CD8-positive, alpha-beta T cell (primary cell): ENCODE measurements at regions of chr17 and their contacts with region 1.

Region 1: GRCh38 chr17:29617125-29617480 is 5.6 kb downstream of the CORO6 start:
- DNase-seq: peak; percentile 78 to 94 (median 90)
- ATAC-seq: peak; percentile 64
- H3K4me3 ChIP-seq: peak overlapping the region; percentile 75 to 82
- H3K4me3 Mint-ChIP-seq: peak overlapping the region; percentile 90
- H3K27ac ChIP-seq: peak overlapping the region in 1 of 2 experiments; percentile 58
- H3K27ac Mint-ChIP-seq: peak overlapping the region; percentile 49
- H3K4me1 ChIP-seq: peaks cover 57% of the 10 kb centered on the region
- H3K4me1 Mint-ChIP-seq: peaks cover 36% of the 10 kb centered on the region
- H3K27me3 ChIP-seq: no peaks in the 10 kb centered on the region
- H3K27me3 Mint-ChIP-seq: no peaks in the 10 kb centered on the region
- CTCF ChIP-seq: peak; percentile 81

Region 2: GRCh38 chr17:29389982-29390850 is 226.9 kb before region 1 on chr17 and contains the start of gene TAOK1:
- CTCF ChIA-PET with region 1: no interaction called
- POLR2A ChIA-PET with region 1: interaction called, 4 read pairs
- intact Hi-C with region 1: loop called in 1 of 2 experiments (anchors 5 kb)
- DNase-seq: peak; percentile 94 to 99 (median 98)
- ATAC-seq: peak; percentile 91
- H3K4me3 ChIP-seq: peak within 1 kb of the TSS; percentile 77 to 85
- H3K4me3 Mint-ChIP-seq: peak within 1 kb of the TSS; percentile 93
- H3K27ac ChIP-seq: peak within 1 kb of the TSS; percentile 84 to 87
- H3K27ac Mint-ChIP-seq: peak within 1 kb of the TSS; percentile 98
- H3K4me1 ChIP-seq: peaks cover 22% of the 10 kb centered on the region
- H3K4me1 Mint-ChIP-seq: peaks cover 41% of the 10 kb centered on the region
- H3K27me3 ChIP-seq: no peaks in the 10 kb centered on the region
- H3K27me3 Mint-ChIP-seq: no peaks in the 10 kb centered on the region
- CTCF ChIP-seq: no peak
- total RNA-seq, gene TAOK1: 25.2 to 26.8 TPM

Region 3: GRCh38 chr17:29504711-29505110 is 112.4 kb before region 1 on chr17:
- CTCF ChIA-PET with region 1: no interaction called
- POLR2A ChIA-PET with region 1: no interaction called
- intact Hi-C with region 1: no loop called
- DNase-seq: no peak
- ATAC-seq: no peak
- H3K4me3 ChIP-seq: no peak overlapping the region
- H3K4me3 Mint-ChIP-seq: no peak overlapping the region
- H3K27ac ChIP-seq: no peak overlapping the region
- H3K27ac Mint-ChIP-seq: no peak overlapping the region
- H3K4me1 ChIP-seq: no peaks in the 10 kb centered on the region
- H3K4me1 Mint-ChIP-seq: peaks cover 3% of the 10 kb centered on the region
- H3K27me3 ChIP-seq: no peaks in the 10 kb centered on the region
- H3K27me3 Mint-ChIP-seq: no peaks in the 10 kb centered on the region
- CTCF ChIP-seq: no peak

Region 4: DNA sequence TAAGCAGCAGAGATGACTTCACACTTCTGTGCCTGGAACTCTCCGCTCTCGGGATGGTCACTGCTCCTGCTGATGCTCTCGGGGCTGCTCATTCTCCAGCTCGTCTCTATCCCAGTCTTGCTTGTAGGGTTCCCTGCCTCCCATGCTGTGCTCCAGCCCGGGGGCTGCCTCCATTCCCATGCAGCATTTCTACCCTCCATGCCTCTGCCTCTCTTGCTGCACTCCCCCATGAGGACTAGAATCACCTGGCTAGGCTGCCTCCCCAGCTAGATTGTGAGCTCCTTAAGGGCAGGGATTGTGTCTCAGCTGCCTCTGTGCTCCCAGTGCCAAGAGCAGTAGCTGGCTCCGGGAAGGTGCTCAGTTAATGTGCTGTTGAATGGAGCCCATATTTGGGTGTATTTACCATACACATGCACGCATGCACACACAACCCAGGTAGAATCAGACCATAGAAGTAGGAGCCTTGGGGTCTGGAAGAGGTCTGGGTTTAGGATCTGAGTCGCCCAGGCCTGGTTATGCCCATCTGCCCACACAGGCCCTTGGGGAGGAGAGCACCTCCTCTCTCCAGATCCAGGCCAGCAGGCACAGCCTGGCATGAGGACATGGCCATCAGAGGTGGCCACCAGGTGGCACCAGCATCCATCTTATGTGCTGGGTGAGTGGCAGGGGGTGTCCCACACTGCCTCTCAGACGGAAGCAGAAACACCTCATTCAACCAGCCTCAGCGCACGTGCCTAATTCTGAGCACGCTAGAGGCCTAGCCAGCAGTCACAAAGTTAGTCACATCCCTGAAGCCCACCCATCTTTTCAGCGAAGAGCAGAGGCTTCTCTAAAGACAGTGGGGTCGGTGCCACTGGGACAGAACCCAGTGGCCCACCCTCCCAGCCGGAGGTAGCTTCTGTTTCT is 37.0 kb before region 1 on chr17:
- CTCF ChIA-PET with region 1: interaction called, 216 read pairs
- POLR2A ChIA-PET with region 1: interaction called, 5 read pairs
- intact Hi-C with region 1: loop called (anchors 1 kb)
- DNase-seq: peak; percentile 81 to 95 (median 92)
- ATAC-seq: peak; percentile 99
- H3K4me3 ChIP-seq: no peak overlapping the region
- H3K4me3 Mint-ChIP-seq: no peak overlapping the region
- H3K27ac ChIP-seq: no peak overlapping the region
- H3K27ac Mint-ChIP-seq: peak overlapping the region; percentile 34
- H3K4me1 ChIP-seq: peaks cover 13% of the 10 kb centered on the region
- H3K4me1 Mint-ChIP-seq: peaks cover 11% of the 10 kb centered on the region
- H3K27me3 ChIP-seq: no peaks in the 10 kb centered on the region
- H3K27me3 Mint-ChIP-seq: no peaks in the 10 kb centered on the region
- CTCF ChIP-seq: peak; percentile 80

Region 5: GRCh38 chr17:29597361-29598172 is 19.5 kb before region 1 on chr17:
- CTCF ChIA-PET with region 1: interaction called, 91 read pairs
- POLR2A ChIA-PET with region 1: interaction called, 63 read pairs
- intact Hi-C with region 1: no loop called
- DNase-seq: peak in 1 of 9 experiments; percentile 14
- ATAC-seq: no peak
- H3K4me3 ChIP-seq: no peak overlapping the region
- H3K4me3 Mint-ChIP-seq: no peak overlapping the region
- H3K27ac ChIP-seq: no peak overlapping the region
- H3K27ac Mint-ChIP-seq: no peak overlapping the region
- H3K4me1 ChIP-seq: peaks cover 9% of the 10 kb centered on the region
- H3K4me1 Mint-ChIP-seq: peaks cover 5% of the 10 kb centered on the region
- H3K27me3 ChIP-seq: no peaks in the 10 kb centered on the region
- H3K27me3 Mint-ChIP-seq: no peaks in the 10 kb centered on the region
- CTCF ChIP-seq: no peak

Region 6: DNA sequence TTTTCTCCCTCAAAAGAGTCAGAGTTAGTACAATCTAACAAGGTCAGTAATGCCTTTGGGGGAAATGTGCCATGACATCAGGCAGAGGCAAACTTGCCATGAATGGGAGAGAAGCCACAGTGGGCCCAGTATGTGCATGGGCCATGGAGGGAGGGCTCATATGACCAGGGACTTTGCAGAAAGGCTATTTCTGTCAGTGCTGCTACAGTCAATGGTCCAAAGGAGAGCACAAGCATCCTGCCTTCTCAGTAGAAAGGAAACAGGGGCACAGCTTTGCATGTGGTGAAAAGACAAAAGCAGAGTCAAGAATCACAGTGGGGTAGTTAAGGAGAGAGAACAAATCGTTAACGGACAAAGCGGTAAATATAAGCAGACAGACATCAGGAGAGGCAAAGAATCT is 16.8 kb after region 1 on chr17:
- CTCF ChIA-PET with region 1: interaction called, 25 read pairs
- POLR2A ChIA-PET with region 1: no interaction called
- intact Hi-C with region 1: no loop called
- DNase-seq: no peak
- ATAC-seq: no peak
- H3K4me3 ChIP-seq: no peak overlapping the region
- H3K4me3 Mint-ChIP-seq: no peak overlapping the region
- H3K27ac ChIP-seq: no peak overlapping the region
- H3K27ac Mint-ChIP-seq: peak overlapping the region; percentile 12
- H3K4me1 ChIP-seq: no peaks in the 10 kb centered on the region
- H3K4me1 Mint-ChIP-seq: peaks cover 6% of the 10 kb centered on the region
- H3K27me3 ChIP-seq: no peaks in the 10 kb centered on the region
- H3K27me3 Mint-ChIP-seq: no peaks in the 10 kb centered on the region
- CTCF ChIP-seq: no peak

Region 7: GRCh38 chr17:29760761-29761696 is 143.9 kb after region 1 on chr17:
- CTCF ChIA-PET with region 1: interaction called, 9 read pairs
- POLR2A ChIA-PET with region 1: interaction called, 23 read pairs
- intact Hi-C with region 1: loop called in 1 of 2 experiments (anchors 1 kb)
- DNase-seq: peak; percentile 80 to 95 (median 92)
- ATAC-seq: peak; percentile 84
- H3K4me3 ChIP-seq: peak overlapping the region; percentile 84 to 88
- H3K4me3 Mint-ChIP-seq: peak overlapping the region; percentile 96
- H3K27ac ChIP-seq: peak overlapping the region; percentile 75 to 81
- H3K27ac Mint-ChIP-seq: peak overlapping the region; percentile 93
- H3K4me1 ChIP-seq: peaks cover 42% of the 10 kb centered on the region
- H3K4me1 Mint-ChIP-seq: peaks cover 41% of the 10 kb centered on the region
- H3K27me3 ChIP-seq: no peaks in the 10 kb centered on the region
- H3K27me3 Mint-ChIP-seq: no peaks in the 10 kb centered on the region
- CTCF ChIP-seq: no peak

Region 8: GRCh38 chr17:30093463-30094147 is 476.5 kb after region 1 on chr17:
- CTCF ChIA-PET with region 1: no interaction called
- POLR2A ChIA-PET with region 1: no interaction called
- intact Hi-C with region 1: loop called in 1 of 2 experiments (anchors 10 kb)
- DNase-seq: peak in 7 of 9 experiments; percentile 14 to 71 (median 51)
- ATAC-seq: peak; percentile 52
- H3K4me3 ChIP-seq: no peak overlapping the region
- H3K4me3 Mint-ChIP-seq: no peak overlapping the region
- H3K27ac ChIP-seq: no peak overlapping the region
- H3K27ac Mint-ChIP-seq: no peak overlapping the region
- H3K4me1 ChIP-seq: no peaks in the 10 kb centered on the region
- H3K4me1 Mint-ChIP-seq: peaks cover 4% of the 10 kb centered on the region
- H3K27me3 ChIP-seq: no peaks in the 10 kb centered on the region
- H3K27me3 Mint-ChIP-seq: peaks cover 14% of the 10 kb centered on the region
- CTCF ChIP-seq: peak; percentile 93